Heart right ventricle (tissue), 16 donors: ENCODE measurements at regions of chr6 and their contacts with region 1.

Region 1: GRCh38 chr6:7725849-7726415 is at the start of gene BMP6:
- DNase-seq: peak; percentile 85 to 86
- ATAC-seq: peak; percentile 92 to 96 (median 95)
- H3K4me3 ChIP-seq: peak within 1 kb of the TSS; percentile 45 to 85 (median 64)
- H3K27ac ChIP-seq: peak within 1 kb of the TSS in 1 of 10 donors; percentile 11
- H3K4me1 ChIP-seq: peaks cover 3 to 43% (median 35%) of the 10 kb centered on the region in 9 donors
- H3K27me3 ChIP-seq: peaks cover 0 to 86% (median 56%) of the 10 kb centered on the region in 7 donors
- CTCF ChIP-seq: no peak
- total RNA-seq, gene BMP6: 1.3 to 4.1 (median 2.6) TPM

Region 2: DNA sequence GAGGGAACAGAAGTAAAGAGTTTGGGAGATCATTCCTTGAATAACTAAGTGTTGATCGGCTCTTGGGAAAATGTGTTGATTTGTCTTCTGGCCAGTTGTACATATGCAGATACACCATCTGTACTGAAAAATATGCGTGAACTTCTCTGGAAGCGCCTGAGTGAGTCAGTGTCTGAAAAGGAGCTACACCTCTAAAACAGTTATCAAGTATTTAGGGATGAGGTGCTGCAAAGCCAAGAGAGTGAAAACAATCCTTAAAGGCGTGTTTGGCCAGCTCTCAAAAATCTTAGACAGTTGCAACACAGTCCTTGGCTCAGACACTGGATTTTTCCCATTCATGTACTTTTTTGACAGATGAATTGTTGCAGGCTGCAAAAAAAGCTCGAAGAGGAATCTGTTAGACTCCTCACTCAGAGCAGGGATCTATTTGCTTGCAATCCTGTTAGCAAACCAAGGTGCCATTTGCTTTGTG is 61.2 kb after region 1 on chr6:
- intact Hi-C with region 1: no loop called
- DNase-seq: peak in 1 of 2 donors; percentile 17
- ATAC-seq: peak in 7 of 8 donors; percentile 30 to 76 (median 62)
- H3K4me3 ChIP-seq: peak overlapping the region in 1 of 10 donors; percentile 0
- H3K27ac ChIP-seq: peak overlapping the region in 3 of 10 donors; percentile 17 to 59 (median 42)
- H3K4me1 ChIP-seq: peaks cover 0 to 36% (median 8%) of the 10 kb centered on the region in 9 donors
- H3K27me3 ChIP-seq: peaks cover 0 to 5% (median 0%) of the 10 kb centered on the region in 7 donors
- CTCF ChIP-seq: no peak

Region 3: GRCh38 chr6:7910654-7911344 is 184.9 kb after region 1 on chr6 and contains the start of gene TXNDC5:
- intact Hi-C with region 1: loop called in 7 of 10 experiments (anchors 5 to 10 kb)
- DNase-seq: peak; percentile 83 to 87
- ATAC-seq: peak; percentile 86 to 95 (median 90)
- H3K4me3 ChIP-seq: peak within 1 kb of the TSS; percentile 58 to 88 (median 73)
- H3K27ac ChIP-seq: peak within 1 kb of the TSS; percentile 56 to 88 (median 86)
- H3K4me1 ChIP-seq: peaks cover 4 to 42% (median 17%) of the 10 kb centered on the region in 9 donors
- H3K27me3 ChIP-seq: no peaks in the 10 kb centered on the region
- CTCF ChIP-seq: no peak
- total RNA-seq, gene TXNDC5: 26.7 to 78.0 (median 38.3) TPM

Region 4: DNA sequence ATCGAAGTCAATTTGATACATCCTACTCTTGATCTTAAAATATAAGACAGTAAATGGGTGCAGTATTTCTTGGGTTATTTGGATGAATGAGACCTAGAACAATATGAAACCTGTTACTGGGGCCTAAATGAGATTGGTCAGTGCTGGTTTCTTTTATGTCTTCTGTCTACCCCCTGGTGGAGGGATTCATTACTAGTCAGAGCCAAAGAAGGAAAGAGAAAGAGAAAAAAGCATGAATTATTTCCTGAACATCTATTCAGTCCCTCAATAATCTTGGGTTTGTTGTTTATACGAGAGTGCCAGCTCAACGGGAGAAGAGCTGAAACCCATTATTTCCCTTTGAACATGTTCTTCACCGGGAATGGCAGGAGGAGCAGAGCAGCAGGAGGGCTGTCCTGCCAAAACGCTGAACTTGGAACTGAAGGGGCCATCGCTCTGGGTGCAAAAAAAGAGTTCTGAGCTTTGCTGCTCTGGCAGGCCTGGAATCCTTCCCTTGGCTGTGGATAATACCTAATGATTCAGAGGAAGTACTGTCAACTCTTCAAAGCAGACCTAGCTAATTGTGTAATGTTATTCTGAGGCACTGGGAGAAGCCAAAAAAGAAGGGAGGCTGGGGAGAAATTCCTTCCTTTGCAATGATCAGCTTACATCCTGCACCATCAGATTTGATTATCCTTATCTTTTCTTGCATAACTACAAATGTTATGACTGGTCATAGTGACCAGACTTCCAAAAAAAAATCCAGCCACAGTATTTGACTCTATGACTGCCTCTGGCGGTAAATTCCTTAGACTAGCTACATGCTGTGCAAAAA is 266.3 kb after region 1 on chr6:
- intact Hi-C with region 1: loop called in 5 of 10 experiments (anchors 1 to 5 kb)
- DNase-seq: peak in 1 of 2 donors; percentile 18
- ATAC-seq: peak; percentile 60 to 90 (median 74)
- H3K4me3 ChIP-seq: peak overlapping the region in 1 of 10 donors; percentile 13
- H3K27ac ChIP-seq: peak overlapping the region in 5 of 10 donors; percentile 20 to 77 (median 31)
- H3K4me1 ChIP-seq: peaks cover 0 to 24% (median 9%) of the 10 kb centered on the region in 9 donors
- H3K27me3 ChIP-seq: no peaks in the 10 kb centered on the region
- CTCF ChIP-seq: peak; percentile 11 to 65 (median 47)

Region 5: DNA sequence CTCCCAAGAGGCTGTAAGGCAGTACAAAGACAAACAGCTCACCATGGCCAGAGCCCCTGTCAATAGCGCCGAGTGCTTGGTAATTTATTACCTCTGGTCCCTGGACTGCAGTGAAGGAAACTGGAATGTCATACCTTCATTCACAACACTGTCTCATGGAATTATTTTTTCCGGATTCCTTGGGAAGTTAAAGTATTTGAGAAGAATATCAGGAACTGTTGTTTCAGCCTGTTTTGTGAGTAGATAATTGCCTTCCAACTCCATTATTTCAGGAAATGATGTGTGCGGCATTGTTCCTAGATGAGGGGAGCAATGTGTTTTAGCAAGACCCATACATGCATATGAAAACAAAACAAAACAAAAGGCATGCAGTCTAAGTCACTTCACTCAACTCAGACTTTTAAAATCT is 274.3 kb after region 1 on chr6:
- intact Hi-C with region 1: loop called in 5 of 10 experiments (anchors 5 kb)
- DNase-seq: no peak
- ATAC-seq: peak in 7 of 8 donors; percentile 43 to 79 (median 67)
- H3K4me3 ChIP-seq: no peak overlapping the region
- H3K27ac ChIP-seq: peak overlapping the region in 4 of 10 donors; percentile 10 to 60 (median 16)
- H3K4me1 ChIP-seq: peaks cover 0 to 25% (median 6%) of the 10 kb centered on the region in 9 donors
- H3K27me3 ChIP-seq: no peaks in the 10 kb centered on the region
- CTCF ChIP-seq: no peak

Region 6: GRCh38 chr6:8006208-8006607 is 280.3 kb after region 1 on chr6:
- intact Hi-C with region 1: loop called in 9 of 10 experiments (anchors 2 to 5 kb)
- DNase-seq: no peak
- ATAC-seq: peak in 3 of 8 donors; percentile 56 to 71 (median 70)
- H3K4me3 ChIP-seq: no peak overlapping the region
- H3K27ac ChIP-seq: no peak overlapping the region
- H3K4me1 ChIP-seq: peaks cover 0 to 8% (median 0%) of the 10 kb centered on the region in 9 donors
- H3K27me3 ChIP-seq: no peaks in the 10 kb centered on the region
- CTCF ChIP-seq: peak; percentile 23 to 70 (median 60)

Region 7: GRCh38 chr6:8219352-8219943 is 493.5 kb after region 1 on chr6:
- intact Hi-C with region 1: loop called in 2 of 10 experiments (anchors 10 kb)
- DNase-seq: peak in 1 of 2 donors; percentile 21
- ATAC-seq: peak in 1 of 8 donors; percentile 61
- H3K4me3 ChIP-seq: no peak overlapping the region
- H3K27ac ChIP-seq: no peak overlapping the region
- H3K4me1 ChIP-seq: no peaks in the 10 kb centered on the region
- H3K27me3 ChIP-seq: peaks cover 0 to 17% (median 4%) of the 10 kb centered on the region in 7 donors
- CTCF ChIP-seq: peak; percentile 50 to 84 (median 74)

Region 8: DNA sequence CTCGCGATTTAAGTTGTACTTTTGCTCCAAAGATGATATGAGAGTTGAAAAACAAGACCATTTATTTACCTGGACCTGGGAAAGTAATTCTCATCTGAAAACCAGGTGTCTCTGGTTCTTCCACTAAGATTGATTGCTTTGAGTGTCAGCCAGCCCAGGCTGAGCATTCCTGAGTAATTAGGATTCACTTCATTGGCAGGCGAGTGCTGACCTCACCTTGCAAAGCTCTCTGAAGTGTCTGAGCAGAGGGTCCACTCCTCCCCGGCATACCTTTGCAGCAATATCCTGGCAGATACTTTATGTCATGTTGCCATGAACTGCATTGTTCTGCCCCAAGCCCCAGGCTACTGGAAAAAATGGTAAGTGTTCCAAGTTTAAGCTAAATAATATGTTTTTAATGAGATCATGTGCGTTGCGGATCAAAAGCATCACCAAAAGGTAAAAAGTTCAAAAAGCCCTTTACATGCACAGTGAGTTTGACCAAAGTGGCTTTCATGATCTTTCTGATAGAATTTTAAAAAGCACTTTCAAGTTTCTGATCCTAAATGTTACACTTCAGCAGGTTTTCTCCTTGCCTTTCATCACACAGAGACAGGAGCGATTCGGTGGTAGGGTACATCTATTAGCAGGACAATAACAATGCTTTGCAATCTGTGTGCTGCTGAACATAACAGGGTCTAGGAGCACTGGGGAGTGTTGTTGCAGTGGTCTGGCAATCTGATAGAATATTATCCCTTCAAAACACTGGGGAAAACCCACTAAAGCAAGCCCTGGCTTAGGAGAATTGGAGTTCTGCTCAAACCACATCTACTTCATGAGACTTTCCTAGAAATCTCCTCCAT is 504.2 kb after region 1 on chr6:
- intact Hi-C with region 1: loop called in 1 of 10 experiments (anchors 10 kb)
- DNase-seq: no peak
- ATAC-seq: no peak
- H3K4me3 ChIP-seq: no peak overlapping the region
- H3K27ac ChIP-seq: no peak overlapping the region
- H3K4me1 ChIP-seq: no peaks in the 10 kb centered on the region
- H3K27me3 ChIP-seq: peaks cover 0 to 16% (median 3%) of the 10 kb centered on the region in 7 donors
- CTCF ChIP-seq: no peak